GM12878 (cell line): ENCODE measurements at regions of chr2 and their contacts with region 1.

Region 1: GRCh38 chr2:8525582-8526402 is 156.1 kb upstream of the ID2 start:
- DNase-seq: peak; percentile 90
- ATAC-seq: peak; percentile 82
- H3K4me3 ChIP-seq: 0 out of 2 replicates have a peak overlapping the region, but pooled peaks have one; percentile 9
- H3K27ac ChIP-seq: peak overlapping the region; percentile 74
- H3K4me1 ChIP-seq: peaks cover 64% of the 10 kb centered on the region
- H3K27me3 ChIP-seq: no peaks in the 10 kb centered on the region
- CTCF ChIP-seq: peak; percentile 54 to 72 (median 58)
- EP300 ChIP-seq: peak in 1 of 2 experiments; percentile 80; a peak in 3 of 4 replicates
- POLR2A ChIP-seq: no peak
- RAD21 ChIP-seq: peak; percentile 88

Region 2: DNA sequence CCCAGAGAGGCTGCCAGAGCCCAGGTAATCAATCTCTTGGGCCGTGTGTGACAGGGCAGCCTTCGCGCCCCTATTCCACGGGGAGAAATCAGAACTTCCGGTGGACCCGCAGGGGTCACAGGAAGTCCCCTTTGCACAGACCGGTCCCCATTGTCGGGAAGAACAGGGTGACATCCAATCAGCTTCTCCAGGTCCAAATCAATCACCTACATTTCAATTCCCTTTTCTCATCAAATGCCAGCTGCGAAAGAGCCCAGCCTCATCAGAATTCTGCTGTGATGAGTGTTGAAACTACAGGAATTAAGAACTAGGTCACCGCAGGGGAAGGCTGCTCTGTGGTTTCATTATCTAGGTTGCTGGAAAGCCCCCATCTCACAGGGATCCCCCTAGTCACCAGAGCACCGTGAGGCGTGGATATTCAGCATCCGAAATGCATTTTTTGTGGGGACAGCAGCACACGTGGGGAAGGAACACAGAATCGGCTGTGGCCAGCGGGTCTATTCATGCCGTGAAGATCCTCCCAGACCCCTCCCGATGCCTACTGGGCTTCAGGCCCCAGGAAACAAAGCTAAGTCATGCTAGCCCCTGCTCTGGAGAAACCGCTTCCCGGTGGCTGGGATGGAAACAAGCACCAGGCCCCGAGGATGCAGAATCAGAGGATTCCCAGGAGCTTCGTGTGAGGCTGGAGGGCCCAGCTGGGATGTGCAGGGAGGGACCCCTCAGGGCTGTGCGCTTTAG is 37.6 kb before region 1 on chr2:
- CTCF ChIA-PET with region 1: interaction called, 8 read pairs
- POLR2A ChIA-PET with region 1: interaction called, 73 read pairs
- RAD21 ChIA-PET with region 1: interaction called, 155 read pairs
- SMC1A ChIA-PET with region 1: interaction called, 121 read pairs
- in situ Hi-C with region 1: no loop called
- intact Hi-C with region 1: loop called (anchors 5 kb)
- DNase-seq: peak; percentile 95
- ATAC-seq: peak; percentile 63
- H3K4me3 ChIP-seq: peak overlapping the region; percentile 75
- H3K27ac ChIP-seq: peak overlapping the region; percentile 80
- H3K4me1 ChIP-seq: peaks cover 19% of the 10 kb centered on the region
- H3K27me3 ChIP-seq: no peaks in the 10 kb centered on the region
- CTCF ChIP-seq: no peak
- EP300 ChIP-seq: peak; percentile 78 to 80; a peak in 3 of 4 replicates
- POLR2A ChIP-seq: no peak
- RAD21 ChIP-seq: peak; percentile 1; the same call in 1 of the 2 replicates

Region 3: GRCh38 chr2:8539743-8540551 is 14.2 kb after region 1 on chr2:
- CTCF ChIA-PET with region 1: interaction called, 64 read pairs
- POLR2A ChIA-PET with region 1: interaction called, 43 read pairs
- RAD21 ChIA-PET with region 1: interaction called, 322 read pairs
- SMC1A ChIA-PET with region 1: interaction called, 284 read pairs
- in situ Hi-C with region 1: no loop called
- intact Hi-C with region 1: loop called (anchors 1 kb)
- DNase-seq: no peak
- ATAC-seq: no peak
- H3K4me3 ChIP-seq: no peak overlapping the region
- H3K27ac ChIP-seq: no peak overlapping the region
- H3K4me1 ChIP-seq: peaks cover 58% of the 10 kb centered on the region
- H3K27me3 ChIP-seq: no peaks in the 10 kb centered on the region
- CTCF ChIP-seq: no peak
- EP300 ChIP-seq: no peak
- POLR2A ChIP-seq: no peak
- RAD21 ChIP-seq: no peak

Region 4: DNA sequence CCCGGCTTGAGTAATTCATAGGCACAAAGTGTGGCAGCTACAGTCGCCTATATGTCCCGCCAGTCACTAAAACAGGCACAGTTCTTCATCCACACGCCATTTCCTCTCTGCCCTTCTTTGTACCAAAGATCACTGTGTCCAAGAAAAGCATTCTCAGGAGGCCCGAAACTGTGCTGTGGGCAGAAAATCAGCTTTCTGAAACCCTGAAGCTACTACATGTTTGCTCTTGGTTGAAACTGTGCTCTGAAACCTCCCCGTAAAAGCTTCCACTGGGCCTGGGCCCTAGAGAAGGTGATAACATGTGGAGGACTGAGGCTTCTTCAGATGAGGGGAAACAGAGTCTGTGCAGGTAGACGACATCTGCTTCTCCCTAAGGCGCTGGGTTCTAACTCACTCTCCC is 80.4 kb after region 1 on chr2:
- CTCF ChIA-PET with region 1: no interaction called
- POLR2A ChIA-PET with region 1: no interaction called
- RAD21 ChIA-PET with region 1: no interaction called
- SMC1A ChIA-PET with region 1: interaction called, 7 read pairs
- in situ Hi-C with region 1: no loop called
- intact Hi-C with region 1: loop called (anchors 5 kb)
- DNase-seq: peak; percentile 82
- ATAC-seq: peak; percentile 90
- H3K4me3 ChIP-seq: no peak overlapping the region
- H3K27ac ChIP-seq: peak overlapping the region; percentile 23
- H3K4me1 ChIP-seq: peaks cover 30% of the 10 kb centered on the region
- H3K27me3 ChIP-seq: no peaks in the 10 kb centered on the region
- CTCF ChIP-seq: no peak
- EP300 ChIP-seq: peak; percentile 38 to 40; a peak in 2 of 4 replicates
- POLR2A ChIP-seq: no peak
- RAD21 ChIP-seq: no peak